ENCODE measurements at regions of chr20 and their contacts with region 1.

Region 1: DNA sequence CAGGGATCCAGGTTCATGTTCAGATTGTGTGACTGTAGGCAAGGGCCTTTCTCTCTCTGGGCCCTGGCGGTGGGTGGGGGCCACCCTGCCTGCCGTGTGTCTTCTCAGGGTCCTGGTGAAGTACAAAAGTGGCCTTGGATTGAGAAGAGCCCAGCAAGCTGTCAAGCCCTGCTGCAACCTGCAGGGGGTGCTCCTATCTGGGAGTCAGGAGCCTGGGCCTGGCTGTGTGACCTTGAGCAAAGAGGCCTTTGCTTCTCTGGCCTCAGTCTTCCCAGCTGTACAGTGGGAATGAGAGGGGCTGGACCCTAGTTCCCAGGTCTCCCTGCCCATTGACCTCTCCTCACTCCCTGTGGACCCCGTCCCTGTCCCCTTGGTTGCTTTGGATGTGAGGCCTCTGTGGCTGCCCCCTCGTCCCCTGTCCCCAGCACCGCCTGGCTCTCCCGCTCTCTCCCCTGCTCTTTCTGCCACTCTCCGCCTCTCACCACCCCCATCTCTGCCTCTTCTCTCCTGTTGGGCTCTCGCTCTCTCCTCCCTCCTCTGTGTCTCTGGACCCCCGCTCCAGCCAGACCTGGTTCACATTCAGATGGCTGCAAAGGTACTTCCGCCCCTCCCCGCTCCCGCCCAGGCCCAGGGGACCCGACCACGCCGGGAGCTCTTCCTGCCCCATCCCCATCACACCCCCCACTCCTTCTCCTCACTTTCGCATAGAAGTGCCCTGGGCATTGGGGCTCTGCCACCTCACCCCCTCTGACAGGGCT is 46.7 kb downstream of the SRC start:
- DNase-seq: no peak
- ATAC-seq: peak; percentile 11

Region 2: GRCh38 chr20:37527638-37528441 is 135.2 kb after region 1 on chr20 and contains the start of gene BLCAP:
- intact Hi-C with region 1: loop called in 1 of 2 experiments (anchors 10 kb)
- DNase-seq: peak; percentile 94 to 95
- ATAC-seq: peak; percentile 82
- total RNA-seq, gene BLCAP: 98.9 to 104 TPM

Measured in left colon (tissue), 2 donors.